HEK293T (cell line): ENCODE measurements at regions of chr2 and their contacts with region 1.

Region 1: GRCh38 chr2:85707304-85707703 is 13.1 kb downstream of the GNLY start:
- DNase-seq: peak; percentile 78

Region 2: DNA sequence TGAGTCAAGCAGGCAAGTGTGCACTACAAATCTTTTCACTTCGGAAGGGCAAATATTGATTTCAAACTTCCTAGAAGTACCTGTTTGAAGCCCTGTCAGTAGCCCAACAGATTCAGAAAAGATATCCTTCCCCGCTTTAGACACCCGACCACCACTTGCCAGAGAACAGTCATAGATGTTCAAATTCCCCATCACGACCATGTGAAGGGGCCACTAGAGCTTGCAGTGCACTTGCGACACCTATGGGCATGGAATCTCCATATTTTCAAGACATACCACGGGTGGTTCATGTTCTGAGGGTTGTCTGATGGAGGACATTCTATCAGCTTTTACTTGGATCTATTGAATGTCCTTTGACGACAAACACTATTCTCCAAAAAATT is 10.7 kb after region 1 on chr2:
- CTCF ChIA-PET with region 1: interaction called, 17 read pairs
- POLR2A ChIA-PET with region 1: no interaction called
- DNase-seq: no peak

Region 3: GRCh38 chr2:85741833-85742455 is 34.6 kb after region 1 on chr2:
- CTCF ChIA-PET with region 1: no interaction called
- POLR2A ChIA-PET with region 1: no interaction called
- DNase-seq: no peak